ENCODE measurements at regions of chr1 and their contacts with region 1.

Region 1: DNA sequence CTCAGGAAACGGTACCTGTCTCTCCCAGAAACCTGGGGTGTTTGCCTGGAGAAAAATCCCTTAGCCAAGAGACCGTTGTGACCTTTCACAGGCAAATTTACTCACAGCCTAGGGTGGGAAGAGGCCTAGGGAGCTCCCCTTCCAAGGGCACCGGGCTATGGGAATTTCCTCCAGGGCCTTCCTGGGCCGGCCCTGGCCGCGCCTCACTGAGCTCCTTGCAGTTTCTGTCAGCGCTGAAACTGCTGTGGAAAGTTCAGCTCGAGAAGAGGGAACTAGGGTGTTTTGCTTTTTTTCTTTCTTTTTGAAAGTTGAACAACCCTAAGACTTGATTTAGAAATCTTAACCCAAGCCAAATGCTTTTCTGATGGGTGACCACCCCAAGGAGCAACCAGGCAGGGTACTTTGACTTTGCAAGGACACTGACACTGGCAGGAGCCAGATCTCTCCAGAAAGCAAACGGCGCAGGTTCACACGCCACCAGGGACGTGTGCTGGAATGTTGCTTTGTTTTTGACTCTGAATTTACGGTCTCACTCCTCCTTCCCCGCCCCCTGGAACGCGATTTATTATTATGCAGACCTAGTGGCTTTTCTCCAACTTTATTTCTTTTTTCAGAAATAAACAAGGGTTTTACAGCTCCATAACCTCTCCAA is 229.6 kb upstream of the JUN start:
- DNase-seq: no peak
- ATAC-seq: peak; percentile 84
- H3K4me3 ChIP-seq: peak overlapping the region; percentile 62
- H3K27ac ChIP-seq: peak overlapping the region; percentile 84
- H3K4me1 ChIP-seq: peaks cover 42% of the 10 kb centered on the region
- H3K27me3 ChIP-seq: no peaks in the 10 kb centered on the region
- CTCF ChIP-seq: no peak
- EP300 ChIP-seq: 0 out of 4 replicates have a peak, but pooled peaks of 1 of the 2 experiments have one; percentile 34
- POLR2A ChIP-seq: no peak
- RAD21 ChIP-seq: no peak

Region 2: DNA sequence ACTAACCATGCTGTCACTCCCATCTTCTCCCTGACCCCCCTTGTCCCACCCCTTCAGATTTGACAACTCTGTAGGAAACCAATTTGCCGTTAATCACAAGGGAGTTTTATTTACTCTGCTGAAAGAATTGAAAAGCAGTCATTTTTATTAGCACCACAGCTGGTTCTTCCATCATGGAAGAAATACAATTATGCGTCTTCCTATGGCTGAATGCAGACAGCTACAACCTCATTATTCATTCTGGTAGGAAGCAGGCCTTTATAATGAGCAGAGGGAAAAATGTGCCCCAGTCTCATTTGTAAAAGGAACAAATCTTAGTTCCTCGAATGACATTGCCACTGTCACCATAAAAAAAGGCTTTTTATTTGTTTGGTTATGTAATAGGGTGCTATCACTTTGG is 264.7 kb before region 1 on chr1:
- CTCF ChIA-PET with region 1: no interaction called
- POLR2A ChIA-PET with region 1: no interaction called
- RAD21 ChIA-PET with region 1: no interaction called
- SMC1A ChIA-PET with region 1: no interaction called
- in situ Hi-C with region 1: no loop called
- intact Hi-C with region 1: no loop called
- DNase-seq: no peak
- ATAC-seq: no peak
- H3K4me3 ChIP-seq: no peak overlapping the region
- H3K27ac ChIP-seq: no peak overlapping the region
- H3K4me1 ChIP-seq: no peaks in the 10 kb centered on the region
- H3K27me3 ChIP-seq: peaks cover 0 to 3% of the 10 kb centered on the region in 2 experiments; a peak in 2 of 4 replicates
- CTCF ChIP-seq: no peak
- EP300 ChIP-seq: no peak
- POLR2A ChIP-seq: no peak
- RAD21 ChIP-seq: no peak

Region 3: DNA sequence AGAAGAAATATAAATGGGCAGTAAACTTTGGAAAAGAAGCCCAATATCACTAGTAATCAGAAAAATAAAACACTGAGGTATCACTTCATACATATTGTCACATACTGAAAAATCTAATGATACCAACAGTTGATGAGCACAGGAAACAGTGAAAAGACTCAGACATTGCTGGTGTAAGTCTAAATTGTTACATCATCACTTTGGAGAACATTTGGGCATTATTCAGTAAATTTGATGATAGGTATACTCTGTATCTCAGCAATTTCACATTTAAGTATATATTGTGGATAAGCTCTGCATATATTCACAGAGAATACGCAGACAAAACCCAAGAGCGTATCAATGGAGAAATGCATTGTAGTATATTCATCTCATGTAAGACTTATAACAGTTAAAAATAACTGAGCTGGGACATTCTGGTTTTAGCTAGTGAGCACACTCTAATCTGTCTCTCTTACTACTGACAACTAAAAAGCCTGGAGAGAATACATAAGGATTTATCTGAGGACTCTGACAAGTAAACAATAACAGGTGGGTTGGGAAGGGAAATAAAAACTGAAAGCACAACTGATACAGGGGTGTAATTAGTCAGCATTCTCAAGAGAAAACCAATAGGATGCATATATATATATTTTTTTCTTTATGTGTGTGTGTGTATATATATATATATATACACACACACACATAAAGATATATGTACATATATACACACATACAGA is 16.9 kb before region 1 on chr1:
- CTCF ChIA-PET with region 1: interaction called, 4 read pairs
- POLR2A ChIA-PET with region 1: interaction called, 4 read pairs
- RAD21 ChIA-PET with region 1: interaction called, 9 read pairs
- SMC1A ChIA-PET with region 1: interaction called, 23 read pairs
- in situ Hi-C with region 1: no loop called
- intact Hi-C with region 1: no loop called
- DNase-seq: no peak
- ATAC-seq: peak; percentile 89
- H3K4me3 ChIP-seq: no peak overlapping the region
- H3K27ac ChIP-seq: no peak overlapping the region
- H3K4me1 ChIP-seq: peaks cover 21% of the 10 kb centered on the region
- H3K27me3 ChIP-seq: no peaks in the 10 kb centered on the region
- CTCF ChIP-seq: no peak
- EP300 ChIP-seq: no peak
- POLR2A ChIP-seq: no peak
- RAD21 ChIP-seq: no peak

Region 4: DNA sequence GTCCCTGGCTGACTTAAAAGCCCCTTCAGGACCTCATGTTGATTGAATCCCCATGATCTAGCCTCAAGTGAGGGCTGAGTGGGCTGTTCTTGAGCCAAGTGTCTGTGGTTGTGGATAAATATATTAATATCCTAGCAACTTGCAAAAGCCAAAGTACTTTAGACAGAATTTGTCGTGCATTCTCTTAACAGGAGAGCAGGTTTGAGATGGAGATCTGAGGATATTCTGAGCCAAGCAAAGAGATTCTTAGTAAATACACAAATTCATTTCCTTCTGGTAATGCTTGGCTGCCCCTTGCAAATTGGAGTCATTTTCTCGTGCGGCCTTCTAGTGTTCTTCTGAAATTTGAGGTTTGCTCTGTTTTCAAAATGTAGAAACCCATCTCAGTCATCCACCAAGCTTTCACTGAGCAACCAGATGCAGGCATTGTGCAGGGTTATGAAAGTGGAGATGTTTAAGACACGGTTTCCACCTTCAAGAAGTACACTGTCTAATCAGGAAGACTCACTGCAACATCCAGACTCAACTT is 12.6 kb after region 1 on chr1:
- CTCF ChIA-PET with region 1: interaction called, 7 read pairs
- POLR2A ChIA-PET with region 1: interaction called, 15 read pairs
- RAD21 ChIA-PET with region 1: interaction called, 13 read pairs
- SMC1A ChIA-PET with region 1: interaction called, 61 read pairs
- in situ Hi-C with region 1: no loop called
- intact Hi-C with region 1: no loop called
- DNase-seq: peak; percentile 85
- ATAC-seq: peak; percentile 85
- H3K4me3 ChIP-seq: 0 out of 2 replicates have a peak overlapping the region, but pooled peaks have one; percentile 9
- H3K27ac ChIP-seq: peak overlapping the region; percentile 84
- H3K4me1 ChIP-seq: peaks cover 21% of the 10 kb centered on the region
- H3K27me3 ChIP-seq: no peaks in the 10 kb centered on the region
- CTCF ChIP-seq: no peak
- EP300 ChIP-seq: no peak
- POLR2A ChIP-seq: no peak
- RAD21 ChIP-seq: 0 out of 2 replicates have a peak, but pooled peaks have one; percentile 13

Region 5: GRCh38 chr1:59046730-59047157 is 33.3 kb after region 1 on chr1:
- CTCF ChIA-PET with region 1: interaction called, 4 read pairs
- POLR2A ChIA-PET with region 1: interaction called, 6 read pairs
- RAD21 ChIA-PET with region 1: interaction called, 22 read pairs
- SMC1A ChIA-PET with region 1: interaction called, 22 read pairs
- in situ Hi-C with region 1: no loop called
- intact Hi-C with region 1: no loop called
- DNase-seq: peak; percentile 59
- ATAC-seq: peak; percentile 99
- H3K4me3 ChIP-seq: no peak overlapping the region
- H3K27ac ChIP-seq: peak overlapping the region; percentile 70
- H3K4me1 ChIP-seq: peaks cover 26% of the 10 kb centered on the region
- H3K27me3 ChIP-seq: no peaks in the 10 kb centered on the region
- CTCF ChIP-seq: peak; percentile 42 to 45 (median 44); a peak in 5 of 6 replicates
- EP300 ChIP-seq: peak in 1 of 2 experiments; percentile 45; a peak in 1 of 4 replicates
- POLR2A ChIP-seq: no peak
- RAD21 ChIP-seq: peak; percentile 66

Region 6: DNA sequence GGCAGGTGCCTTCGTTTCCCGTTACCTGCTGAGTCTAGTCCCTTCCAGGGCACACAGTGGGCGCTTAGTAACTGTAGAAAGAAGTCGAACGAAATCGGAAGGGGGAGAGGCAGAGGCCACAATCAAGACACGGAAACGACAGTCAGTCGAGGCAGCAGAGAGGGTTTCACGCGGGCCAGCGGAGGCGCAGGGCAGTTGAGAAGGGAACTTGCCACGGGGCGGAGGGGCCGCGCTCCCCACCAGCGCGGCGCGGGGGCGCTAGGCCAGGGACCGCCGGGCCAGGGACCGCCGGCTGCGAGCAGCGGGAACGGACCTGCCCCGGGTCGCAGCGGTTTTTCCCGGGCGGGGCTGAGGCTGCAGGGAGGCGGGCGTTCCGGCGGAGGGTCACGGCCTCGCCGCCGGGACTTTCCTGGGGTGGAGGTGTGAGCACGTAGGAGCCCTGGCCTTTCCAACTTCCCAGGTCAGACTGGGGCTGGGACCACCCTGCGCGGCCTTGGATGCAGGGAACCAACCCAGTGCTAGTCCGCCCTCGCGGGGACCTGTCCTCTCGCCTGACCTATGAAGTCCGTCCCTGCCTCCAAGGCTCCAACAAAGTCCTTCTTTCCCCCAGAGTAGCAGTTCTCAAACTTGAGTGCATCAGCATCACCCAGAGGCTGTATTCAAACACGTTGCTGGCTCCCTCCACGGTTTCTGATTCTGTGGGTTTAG is 133.4 kb after region 1 on chr1:
- CTCF ChIA-PET with region 1: no interaction called
- POLR2A ChIA-PET with region 1: no interaction called
- RAD21 ChIA-PET with region 1: interaction called, 5 read pairs
- SMC1A ChIA-PET with region 1: interaction called, 3 read pairs
- in situ Hi-C with region 1: no loop called
- intact Hi-C with region 1: loop called (anchors 10 kb)
- DNase-seq: no peak
- ATAC-seq: peak; percentile 87
- H3K4me3 ChIP-seq: peak overlapping the region; percentile 62
- H3K27ac ChIP-seq: peak overlapping the region; percentile 60
- H3K4me1 ChIP-seq: peaks cover 32% of the 10 kb centered on the region
- H3K27me3 ChIP-seq: no peaks in the 10 kb centered on the region
- CTCF ChIP-seq: peak in 2 of 3 experiments; percentile 1 to 18; a peak in 1 of 6 replicates
- EP300 ChIP-seq: no peak
- POLR2A ChIP-seq: peak; percentile 73
- RAD21 ChIP-seq: peak; percentile 41

Region 7: DNA sequence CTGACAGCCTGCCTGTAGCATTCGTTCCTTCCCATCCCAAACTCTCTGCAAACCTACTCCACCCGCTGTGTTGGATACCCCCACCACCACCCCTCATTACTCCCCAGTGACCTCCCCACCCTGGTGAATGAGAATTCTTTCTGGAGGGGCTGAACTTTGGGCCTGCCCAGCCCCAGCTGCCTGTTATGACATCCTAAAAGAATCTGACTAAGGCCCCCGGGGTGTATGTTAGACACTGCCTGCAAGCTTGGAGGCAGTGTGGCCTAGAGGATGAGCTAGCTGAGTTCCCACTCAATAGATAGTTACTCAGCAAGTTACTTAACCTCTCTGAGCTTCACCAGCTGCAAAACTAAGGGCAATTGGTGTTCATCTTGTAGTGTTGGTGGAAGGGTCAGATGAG is 173.3 kb after region 1 on chr1:
- CTCF ChIA-PET with region 1: no interaction called
- POLR2A ChIA-PET with region 1: no interaction called
- RAD21 ChIA-PET with region 1: no interaction called
- SMC1A ChIA-PET with region 1: no interaction called
- in situ Hi-C with region 1: no loop called
- intact Hi-C with region 1: no loop called
- DNase-seq: no peak
- ATAC-seq: no peak
- H3K4me3 ChIP-seq: no peak overlapping the region
- H3K27ac ChIP-seq: no peak overlapping the region
- H3K4me1 ChIP-seq: no peaks in the 10 kb centered on the region
- H3K27me3 ChIP-seq: no peaks in the 10 kb centered on the region
- CTCF ChIP-seq: no peak
- EP300 ChIP-seq: no peak
- POLR2A ChIP-seq: no peak
- RAD21 ChIP-seq: no peak

Region 8: DNA sequence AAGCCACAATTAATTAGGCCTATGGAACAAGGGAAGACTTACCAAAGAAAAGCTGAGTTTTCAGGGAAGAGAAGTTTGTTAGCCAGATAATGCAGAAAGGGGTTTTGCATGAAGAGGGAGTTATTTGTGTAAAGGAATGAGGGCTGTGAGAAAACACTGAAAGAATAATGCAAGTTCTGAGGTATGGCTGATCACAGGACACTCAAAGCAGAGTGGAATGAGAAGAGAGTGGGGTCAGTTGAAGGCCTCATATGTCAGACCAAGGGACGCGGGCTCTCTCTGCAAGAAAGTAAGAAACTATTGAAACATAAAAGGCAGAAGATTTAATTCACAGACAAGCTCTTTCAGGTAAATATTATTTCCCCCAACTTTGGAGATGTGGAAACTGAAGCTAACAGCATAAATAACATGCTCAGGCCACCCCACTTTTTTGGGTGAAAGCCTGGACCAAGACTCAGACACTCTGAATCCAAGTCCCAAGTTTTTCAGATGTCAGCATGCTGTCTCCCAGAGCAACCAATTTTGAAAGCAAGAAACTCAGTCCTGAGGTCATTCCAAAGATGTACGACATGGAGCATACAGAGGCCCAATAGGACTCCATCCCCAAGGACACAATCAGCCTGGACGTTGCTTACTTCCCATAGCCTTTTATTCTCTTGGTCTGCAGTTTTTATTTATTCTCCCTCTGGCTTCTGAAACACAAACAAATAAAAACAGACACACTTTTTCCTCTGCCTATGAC is 236.2 kb after region 1 on chr1:
- CTCF ChIA-PET with region 1: no interaction called
- POLR2A ChIA-PET with region 1: no interaction called
- RAD21 ChIA-PET with region 1: no interaction called
- SMC1A ChIA-PET with region 1: no interaction called
- in situ Hi-C with region 1: no loop called
- intact Hi-C with region 1: no loop called
- DNase-seq: no peak
- ATAC-seq: no peak
- H3K4me3 ChIP-seq: no peak overlapping the region
- H3K27ac ChIP-seq: no peak overlapping the region
- H3K4me1 ChIP-seq: no peaks in the 10 kb centered on the region
- H3K27me3 ChIP-seq: no peaks in the 10 kb centered on the region
- CTCF ChIP-seq: no peak
- EP300 ChIP-seq: no peak
- POLR2A ChIP-seq: no peak
- RAD21 ChIP-seq: no peak